HepG2 (cell line): ENCODE measurements at regions of chr3 and their contacts with region 1.

Region 1: GRCh38 chr3:155854141-155854940 is at the start of gene SLC33A1:
- DNase-seq: peak; percentile 98
- ATAC-seq: peak; percentile 98
- H3K4me3 ChIP-seq: peak within 1 kb of the TSS; percentile 78 to 98 (median 89)
- H3K27ac ChIP-seq: peak within 1 kb of the TSS; percentile 97
- H3K4me1 ChIP-seq: peaks cover 35% of the 10 kb centered on the region
- H3K27me3 ChIP-seq: no peaks in the 10 kb centered on the region; a peak in 1 of 5 replicates
- CTCF ChIP-seq: peak; percentile 22
- EP300 ChIP-seq: peak in 1 of 2 experiments; percentile 61; a peak in 1 of 4 replicates
- POLR2A ChIP-seq: peak; percentile 86 to 94
- RAD21 ChIP-seq: peak; percentile 33; the same call in 1 of the 2 replicates
- total RNA-seq, gene SLC33A1: 23.2 and 32.1 TPM in 2 replicates

Region 2: DNA sequence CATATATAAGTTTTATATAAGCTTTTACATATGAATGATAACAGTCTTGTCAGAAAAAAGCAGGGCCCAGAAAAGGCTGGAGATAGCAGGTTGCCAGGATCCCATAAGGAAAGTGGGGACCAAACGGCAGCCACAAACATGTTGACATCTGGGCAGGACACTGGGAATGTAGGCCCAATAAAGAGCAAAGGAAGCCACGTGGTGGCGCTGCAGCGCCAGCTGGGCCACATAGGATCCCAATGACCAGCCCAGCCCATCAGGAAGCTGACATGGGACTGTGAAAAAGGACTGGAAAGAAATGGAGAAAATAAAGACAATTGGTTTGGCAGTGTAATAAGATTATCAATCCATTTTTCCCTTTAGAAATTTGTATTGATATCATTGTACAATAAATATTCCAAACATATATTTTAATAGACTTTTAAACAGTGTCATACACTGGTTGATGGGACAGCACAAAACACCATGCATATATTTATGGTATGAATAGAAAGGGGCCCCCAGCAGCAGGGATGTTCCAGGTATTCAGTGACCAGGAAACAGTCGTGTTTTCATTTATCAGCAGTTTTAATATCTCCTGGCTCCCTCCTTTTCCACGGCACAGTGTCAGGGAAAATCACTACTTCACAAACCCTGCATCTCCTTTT is 471.8 kb before region 1 on chr3:
- CTCF ChIA-PET with region 1: no interaction called
- POLR2A ChIA-PET with region 1: no interaction called
- in situ Hi-C with region 1: no loop called
- intact Hi-C with region 1: loop called (anchors 10 kb)
- DNase-seq: peak; percentile 53
- ATAC-seq: peak; percentile 100
- H3K4me3 ChIP-seq: no peak overlapping the region
- H3K27ac ChIP-seq: no peak overlapping the region
- H3K4me1 ChIP-seq: no peaks in the 10 kb centered on the region
- H3K27me3 ChIP-seq: peaks cover 0 to 2% of the 10 kb centered on the region in 2 experiments; a peak in 1 of 5 replicates
- CTCF ChIP-seq: peak; percentile 93
- EP300 ChIP-seq: no peak
- POLR2A ChIP-seq: no peak
- RAD21 ChIP-seq: peak; percentile 90